Head of caudate nucleus (tissue), 42 donors: ENCODE measurements at regions of chr3 and their contacts with region 1.

Region 1: DNA sequence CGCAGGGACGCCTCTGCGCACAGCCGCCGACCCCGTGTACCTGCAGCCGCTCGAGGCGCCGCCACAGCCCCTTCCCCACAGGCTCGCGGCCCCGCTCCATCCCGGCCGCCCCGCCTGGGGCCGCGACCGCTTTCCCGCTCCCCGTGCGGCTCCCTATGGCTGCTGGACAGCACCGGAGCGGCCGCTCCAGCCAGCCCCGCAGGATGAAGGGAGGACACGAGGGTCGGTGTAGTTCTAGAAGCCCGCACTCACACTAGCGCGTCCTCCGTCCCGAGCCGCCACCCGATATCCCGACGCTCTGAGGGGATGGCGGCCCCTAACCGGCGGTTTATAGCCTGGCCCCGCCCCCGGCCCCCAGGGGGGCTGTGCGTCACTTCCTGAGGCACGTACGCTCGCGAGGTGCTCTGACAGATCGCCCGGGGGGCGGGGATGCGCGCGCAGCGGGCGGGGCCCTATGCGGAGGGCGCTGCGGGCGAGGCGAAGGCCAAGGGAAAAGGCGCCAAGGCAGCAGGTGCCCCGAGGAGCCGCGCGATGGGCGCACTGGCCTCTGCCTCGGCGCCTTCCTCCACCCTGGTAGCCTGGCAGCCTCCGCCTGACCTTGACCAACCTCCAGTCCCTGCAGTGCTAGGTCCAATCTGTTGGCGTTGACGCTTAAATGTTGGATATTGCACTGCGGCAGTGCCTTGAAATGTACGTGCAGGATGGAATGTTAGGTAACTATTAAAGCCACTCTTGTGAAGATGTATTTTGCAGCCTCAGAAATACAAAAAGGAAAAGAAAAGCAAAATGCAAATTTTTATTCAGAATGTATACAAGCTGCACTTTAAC is at the start of gene TFRC:
- DNase-seq: peak; percentile 93 to 99 (median 97)

Region 2: GRCh38 chr3:196192036-196192523 is 110.1 kb after region 1 on chr3:
- intact Hi-C with region 1: loop called (anchors 5 kb)
- DNase-seq: peak in 1 of 42 donors; percentile 23